ENCODE measurements at regions of chr12 and their contacts with region 1.

Region 1: DNA sequence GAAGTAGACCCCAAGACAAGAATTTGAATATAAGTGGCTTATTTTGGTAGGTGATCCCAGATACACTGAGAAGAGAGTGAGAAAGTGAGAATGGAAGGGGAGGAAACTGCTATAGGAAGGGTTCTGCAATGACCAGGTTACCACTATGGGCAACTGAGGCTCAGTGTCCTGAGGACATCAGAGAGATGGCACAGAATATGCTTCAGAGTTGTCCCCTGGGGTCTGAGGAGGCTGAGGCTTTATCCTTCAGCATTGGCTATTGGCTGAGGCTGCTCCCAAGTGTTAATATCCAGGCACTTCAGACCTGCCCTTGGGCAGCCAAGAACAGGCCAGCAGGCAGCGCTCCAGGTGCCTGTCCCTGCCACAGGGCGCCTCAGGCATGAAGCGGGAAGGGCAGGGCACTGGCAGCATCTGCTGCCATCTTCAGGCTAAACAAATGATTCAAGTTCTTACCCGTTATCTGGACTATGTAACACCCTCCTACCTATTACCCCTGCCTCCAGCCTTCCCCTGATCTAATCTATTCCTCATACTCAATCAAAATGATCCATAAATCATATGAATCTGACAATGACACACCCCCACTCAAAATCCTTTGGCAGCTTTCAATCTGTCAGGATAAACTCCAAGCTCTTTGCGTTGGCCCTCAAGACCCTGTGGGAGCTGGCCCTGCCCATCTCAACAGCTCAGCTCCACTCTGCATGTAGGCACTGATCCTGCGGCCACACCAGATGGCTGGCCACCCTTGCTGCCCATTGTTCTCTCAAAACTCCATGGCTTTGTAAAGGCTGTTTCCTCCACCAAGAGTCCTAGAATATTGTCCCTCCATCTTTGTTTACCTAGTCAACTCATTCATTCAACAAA is 42.4 kb downstream of the CKAP4 start:
- DNase-seq: peak; percentile 59 to 88
- ATAC-seq: peak; percentile 99 to 100 (median 99)
- H3K4me3 ChIP-seq: no peak overlapping the region
- H3K27ac ChIP-seq: peak overlapping the region; percentile 23
- H3K4me1 ChIP-seq: peaks cover 22% of the 10 kb centered on the region
- H3K27me3 ChIP-seq: no peaks in the 10 kb centered on the region
- CTCF ChIP-seq: peak; percentile 60

Region 2: GRCh38 chr12:105705765-105706164 is 499.7 kb before region 1 on chr12:
- intact Hi-C with region 1: loop called (anchors 10 kb)
- DNase-seq: peak in 1 of 2 donors; percentile 29
- ATAC-seq: peak; percentile 47 to 74 (median 60)
- H3K4me3 ChIP-seq: no peak overlapping the region
- H3K27ac ChIP-seq: peak overlapping the region; percentile 79
- H3K4me1 ChIP-seq: peaks cover 23% of the 10 kb centered on the region
- H3K27me3 ChIP-seq: no peaks in the 10 kb centered on the region
- CTCF ChIP-seq: peak; percentile 77